ENCODE measurements at regions of chr16 and their contacts with region 1.

Region 1: GRCh38 chr16:69565671-69566239 is at the start of gene NFAT5:
- DNase-seq: peak; percentile 90
- H3K4me3 Mint-ChIP-seq: peak within 1 kb of the TSS; percentile 100
- H3K27ac Mint-ChIP-seq: peak within 1 kb of the TSS; percentile 98
- H3K4me1 Mint-ChIP-seq: peaks cover 39% of the 10 kb centered on the region
- H3K27me3 Mint-ChIP-seq: no peaks in the 10 kb centered on the region
- total RNA-seq, gene NFAT5: 49.2 and 54.0 TPM in 2 replicates

Region 2: GRCh38 chr16:69339289-69340108 is 226.3 kb before region 1 on chr16 and contains the starts of genes COG8 and NIP7:
- intact Hi-C with region 1: loop called (anchors 1 kb)
- DNase-seq: peak; percentile 91
- H3K4me3 Mint-ChIP-seq: peak within 1 kb of the TSS; percentile 98
- H3K27ac Mint-ChIP-seq: peak within 1 kb of the TSS; percentile 96
- H3K4me1 Mint-ChIP-seq: peaks cover 31% of the 10 kb centered on the region
- H3K27me3 Mint-ChIP-seq: no peaks in the 10 kb centered on the region
- total RNA-seq, gene COG8: 41.5 and 42.9 TPM in 2 replicates
- total RNA-seq, gene NIP7: 60.5 and 60.8 TPM in 2 replicates

Region 3: DNA sequence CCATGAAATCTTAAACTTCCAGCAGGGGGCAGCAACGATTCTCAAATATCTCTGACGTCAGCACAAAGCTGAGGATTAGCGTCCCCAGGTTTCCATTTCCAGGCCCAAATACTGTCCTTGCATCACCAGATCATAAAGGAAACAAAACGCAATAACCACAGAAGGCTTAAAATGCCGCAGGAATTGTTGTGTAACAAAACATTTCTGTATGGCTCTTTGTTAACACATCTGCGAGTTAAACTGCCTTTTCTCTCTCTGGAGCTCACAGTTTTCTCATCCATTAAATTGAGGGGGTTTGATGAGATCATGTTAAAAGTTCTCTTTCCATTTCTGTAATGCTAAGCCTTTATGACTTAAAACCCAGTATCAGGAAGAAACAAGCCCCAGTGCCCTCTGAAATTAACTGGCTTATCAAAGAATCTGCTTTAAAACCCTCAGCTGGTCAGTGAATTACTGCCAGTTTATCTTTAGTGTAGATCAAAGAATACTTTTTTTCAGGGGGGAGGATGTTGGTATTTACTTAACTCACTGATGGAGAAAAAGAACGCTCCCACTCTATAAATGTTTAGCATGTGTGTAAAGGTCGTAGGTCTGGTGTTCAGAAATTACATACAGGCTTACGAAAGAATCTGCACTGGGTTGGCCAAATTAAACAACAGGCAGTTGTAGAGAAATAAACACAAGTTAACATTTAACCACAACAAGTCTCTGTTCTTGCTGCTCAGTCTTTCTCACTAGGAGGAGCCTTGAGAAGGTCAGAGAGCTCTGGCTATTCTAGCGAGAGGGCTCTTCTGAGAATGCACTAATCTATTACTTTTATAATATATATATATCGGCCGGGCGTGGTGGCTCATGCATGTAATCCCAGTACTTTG is 169.3 kb before region 1 on chr16:
- intact Hi-C with region 1: loop called (anchors 1 kb)
- DNase-seq: peak; percentile 57
- H3K4me3 Mint-ChIP-seq: no peak overlapping the region
- H3K27ac Mint-ChIP-seq: peak overlapping the region; percentile 61
- H3K4me1 Mint-ChIP-seq: peaks cover 27% of the 10 kb centered on the region
- H3K27me3 Mint-ChIP-seq: peaks cover 5% of the 10 kb centered on the region

Region 4: GRCh38 chr16:69451166-69451565 is 114.6 kb before region 1 on chr16:
- intact Hi-C with region 1: loop called (anchors 1 kb)
- DNase-seq: no peak
- H3K4me3 Mint-ChIP-seq: peak overlapping the region; percentile 27
- H3K27ac Mint-ChIP-seq: peak overlapping the region; percentile 83
- H3K4me1 Mint-ChIP-seq: peaks cover 42% of the 10 kb centered on the region
- H3K27me3 Mint-ChIP-seq: no peaks in the 10 kb centered on the region

Region 5: GRCh38 chr16:69494993-69495392 is 70.8 kb before region 1 on chr16:
- intact Hi-C with region 1: loop called (anchors 2 kb)
- DNase-seq: peak; percentile 13
- H3K4me3 Mint-ChIP-seq: no peak overlapping the region
- H3K27ac Mint-ChIP-seq: peak overlapping the region; percentile 46
- H3K4me1 Mint-ChIP-seq: peaks cover 3% of the 10 kb centered on the region
- H3K27me3 Mint-ChIP-seq: no peaks in the 10 kb centered on the region

Region 6: GRCh38 chr16:69535123-69536050 is 30.4 kb before region 1 on chr16:
- intact Hi-C with region 1: loop called (anchors 1 kb)
- DNase-seq: no peak
- H3K4me3 Mint-ChIP-seq: no peak overlapping the region
- H3K27ac Mint-ChIP-seq: no peak overlapping the region
- H3K4me1 Mint-ChIP-seq: peaks cover 28% of the 10 kb centered on the region
- H3K27me3 Mint-ChIP-seq: peaks cover 2% of the 10 kb centered on the region

Region 7: DNA sequence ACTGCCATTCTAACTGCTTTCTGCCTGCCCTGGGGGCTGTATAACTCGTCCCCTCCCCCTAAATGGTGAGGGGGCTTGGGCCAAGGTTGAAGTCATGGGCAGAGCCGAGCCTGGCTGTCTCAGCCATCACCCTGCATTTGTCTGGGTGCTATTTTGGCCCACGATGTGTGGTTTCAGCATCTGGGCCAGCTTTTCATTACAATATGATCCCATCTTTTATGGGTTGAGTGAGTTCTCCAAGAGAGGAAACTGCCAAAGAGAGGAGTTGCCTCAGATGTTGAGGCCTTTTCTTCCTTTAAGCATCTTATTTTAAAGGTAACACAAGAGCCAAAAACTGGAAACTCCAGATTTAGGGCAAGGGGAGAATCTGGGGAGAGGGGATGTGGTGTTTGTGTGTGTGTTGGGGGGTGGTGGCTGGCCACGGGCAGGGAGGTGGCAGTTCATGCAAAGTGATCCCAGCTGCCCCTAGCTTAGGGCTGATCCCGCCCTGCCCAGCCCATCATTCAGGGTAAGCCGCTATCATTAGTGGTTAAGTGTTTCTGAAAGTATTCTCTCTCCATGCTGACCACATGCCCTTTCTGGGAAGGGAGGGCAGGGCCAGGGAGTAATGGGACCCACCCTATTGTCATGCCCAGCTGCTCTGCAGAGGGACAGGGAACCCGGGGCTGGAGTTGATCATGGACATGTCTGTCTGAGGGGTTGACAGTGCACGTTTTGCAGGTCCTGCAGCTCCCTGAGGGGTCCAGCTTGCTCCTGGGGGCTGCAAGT is 302.2 kb after region 1 on chr16:
- intact Hi-C with region 1: no loop called
- DNase-seq: no peak
- H3K4me3 Mint-ChIP-seq: no peak overlapping the region
- H3K27ac Mint-ChIP-seq: no peak overlapping the region
- H3K4me1 Mint-ChIP-seq: peaks cover 2% of the 10 kb centered on the region
- H3K27me3 Mint-ChIP-seq: no peaks in the 10 kb centered on the region